CD8-positive, alpha-beta T cell (primary cell): ENCODE measurements at regions of chr6 and their contacts with region 1.

Region 1: GRCh38 chr6:31366693-31367470 is 9.9 kb upstream of the HLA-B start:
- DNase-seq: peak; percentile 80 to 94 (median 90)
- ATAC-seq: peak; percentile 98
- H3K4me3 ChIP-seq: peak overlapping the region; percentile 54 to 57
- H3K4me3 Mint-ChIP-seq: peak overlapping the region; percentile 86
- H3K27ac ChIP-seq: peak overlapping the region in 1 of 2 experiments; percentile 31
- H3K27ac Mint-ChIP-seq: peak overlapping the region; percentile 82
- H3K4me1 ChIP-seq: peaks cover 3% of the 10 kb centered on the region
- H3K4me1 Mint-ChIP-seq: peaks cover 15% of the 10 kb centered on the region
- H3K27me3 ChIP-seq: no peaks in the 10 kb centered on the region
- H3K27me3 Mint-ChIP-seq: peaks cover 11% of the 10 kb centered on the region
- CTCF ChIP-seq: peak; percentile 94

Region 2: DNA sequence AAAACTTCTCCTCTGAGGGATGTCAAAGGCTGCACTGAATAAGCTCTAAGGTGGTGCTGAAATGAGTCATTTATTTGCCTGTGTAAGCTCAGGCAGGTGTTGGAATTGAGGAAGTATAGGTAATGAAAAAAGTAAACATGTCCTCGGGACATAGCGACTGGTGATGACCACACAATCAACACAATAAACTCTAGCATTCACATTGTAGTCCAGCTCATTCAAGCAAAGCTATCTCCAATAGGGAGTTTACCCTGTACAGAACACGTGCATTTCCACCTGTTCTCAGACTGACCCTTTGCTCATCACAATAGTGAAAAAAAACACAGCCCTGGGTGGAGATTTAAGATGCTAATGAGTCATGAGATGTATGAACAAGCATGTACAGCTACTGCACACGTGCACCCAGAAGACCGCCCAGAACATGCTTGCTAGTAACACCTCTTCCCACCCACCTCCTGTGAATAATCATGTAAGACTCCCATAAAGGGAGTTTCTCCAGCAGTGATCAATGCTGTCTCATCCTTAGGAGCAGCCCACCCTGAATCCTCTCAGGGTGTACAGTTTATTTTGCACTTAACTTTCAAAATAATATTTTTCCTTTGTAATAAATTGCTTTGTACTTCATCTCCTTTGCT is 163.4 kb before region 1 on chr6:
- CTCF ChIA-PET with region 1: interaction called, 43 read pairs
- POLR2A ChIA-PET with region 1: interaction called, 55 read pairs
- intact Hi-C with region 1: no loop called
- DNase-seq: peak in 7 of 9 experiments; percentile 29 to 90 (median 63)
- ATAC-seq: peak; percentile 60
- H3K4me3 ChIP-seq: peak overlapping the region; percentile 65 to 95
- H3K4me3 Mint-ChIP-seq: peak overlapping the region; percentile 93
- H3K27ac ChIP-seq: peak overlapping the region; percentile 84 to 95
- H3K27ac Mint-ChIP-seq: peak overlapping the region; percentile 98
- H3K4me1 ChIP-seq: peaks cover 46% of the 10 kb centered on the region
- H3K4me1 Mint-ChIP-seq: peaks cover 60% of the 10 kb centered on the region
- H3K27me3 ChIP-seq: no peaks in the 10 kb centered on the region
- H3K27me3 Mint-ChIP-seq: no peaks in the 10 kb centered on the region
- CTCF ChIP-seq: no peak

Region 3: DNA sequence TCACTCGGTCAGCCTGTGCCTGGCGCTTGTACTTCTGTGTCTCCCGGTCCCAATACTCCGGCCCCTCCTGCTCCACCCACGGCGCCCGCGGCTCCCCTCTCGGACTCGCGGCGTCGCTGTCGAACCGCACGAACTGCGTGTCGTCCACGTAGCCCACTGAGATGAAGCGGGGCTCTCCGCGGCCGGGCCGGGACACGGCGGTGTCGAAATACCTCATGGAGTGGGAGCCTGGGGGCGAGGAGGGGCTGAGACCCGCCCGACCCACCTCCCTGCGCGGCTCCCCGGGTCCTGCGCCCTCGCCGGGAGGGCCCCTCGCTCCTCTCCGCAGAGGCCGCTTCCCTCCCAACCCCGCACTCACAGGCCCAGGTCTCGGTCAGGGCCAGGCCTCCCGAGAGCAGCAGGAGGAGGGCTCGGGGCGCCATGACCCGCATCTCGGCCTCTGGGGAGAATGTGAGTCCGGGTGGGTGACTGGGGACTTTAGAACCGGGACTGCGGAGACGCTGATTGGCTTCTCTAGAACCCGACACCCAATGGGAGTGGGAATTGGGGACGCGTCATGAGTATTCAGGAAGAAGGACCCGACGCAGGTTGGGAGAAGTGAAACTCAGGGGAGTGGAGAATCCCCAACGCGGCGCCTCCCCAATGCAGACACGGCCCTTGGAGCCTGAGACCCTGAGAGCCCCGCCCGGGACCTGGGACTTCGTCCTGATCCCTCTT is 95.1 kb before region 1 on chr6 and contains the start of gene HLA-C:
- CTCF ChIA-PET with region 1: interaction called, 15 read pairs
- POLR2A ChIA-PET with region 1: interaction called, 6 read pairs
- intact Hi-C with region 1: loop called (anchors 1 to 2 kb)
- DNase-seq: peak; percentile 79 to 98 (median 92)
- ATAC-seq: peak; percentile 85
- H3K4me3 ChIP-seq: peak within 1 kb of the TSS; percentile 82 to 86
- H3K4me3 Mint-ChIP-seq: peak within 1 kb of the TSS; percentile 95
- H3K27ac ChIP-seq: peak within 1 kb of the TSS; percentile 93 to 98
- H3K27ac Mint-ChIP-seq: peak within 1 kb of the TSS; percentile 100
- H3K4me1 ChIP-seq: peaks cover 43% of the 10 kb centered on the region
- H3K4me1 Mint-ChIP-seq: peaks cover 56% of the 10 kb centered on the region
- H3K27me3 ChIP-seq: no peaks in the 10 kb centered on the region
- H3K27me3 Mint-ChIP-seq: no peaks in the 10 kb centered on the region
- CTCF ChIP-seq: no peak
- total RNA-seq, gene HLA-C: 2,677 to 2,722 TPM

Region 4: DNA sequence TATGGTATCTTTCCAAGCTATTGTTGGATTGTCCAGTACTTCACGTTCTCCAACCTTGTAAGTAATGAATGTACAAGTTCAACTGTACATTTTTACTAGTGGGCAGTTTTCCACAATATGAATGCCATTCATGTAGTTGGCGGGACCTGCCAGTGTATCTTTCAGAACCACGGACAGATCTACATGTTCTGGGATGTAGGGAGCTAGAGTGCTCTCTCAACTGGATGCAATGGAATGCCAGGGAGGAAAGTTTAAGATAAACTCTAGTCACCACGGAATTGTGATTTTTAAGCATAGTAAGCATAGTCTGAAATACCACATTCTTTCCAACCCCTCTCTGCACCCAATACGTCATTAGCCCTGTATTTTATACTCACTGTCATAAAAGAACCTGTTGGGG is 73.5 kb before region 1 on chr6:
- CTCF ChIA-PET with region 1: interaction called, 13 read pairs
- POLR2A ChIA-PET with region 1: no interaction called
- intact Hi-C with region 1: no loop called
- DNase-seq: no peak
- ATAC-seq: no peak
- H3K4me3 ChIP-seq: no peak overlapping the region
- H3K4me3 Mint-ChIP-seq: no peak overlapping the region
- H3K27ac ChIP-seq: no peak overlapping the region
- H3K27ac Mint-ChIP-seq: no peak overlapping the region
- H3K4me1 ChIP-seq: no peaks in the 10 kb centered on the region
- H3K4me1 Mint-ChIP-seq: no peaks in the 10 kb centered on the region
- H3K27me3 ChIP-seq: peaks cover 0 to 2% of the 10 kb centered on the region in 2 experiments
- H3K27me3 Mint-ChIP-seq: peaks cover 3% of the 10 kb centered on the region
- CTCF ChIP-seq: no peak

Region 5: GRCh38 chr6:31378062-31378720 is 11.3 kb after region 1 on chr6:
- CTCF ChIA-PET with region 1: interaction called, 26 read pairs
- POLR2A ChIA-PET with region 1: no interaction called
- intact Hi-C with region 1: no loop called
- DNase-seq: no peak
- ATAC-seq: no peak
- H3K4me3 ChIP-seq: no peak overlapping the region
- H3K4me3 Mint-ChIP-seq: no peak overlapping the region
- H3K27ac ChIP-seq: no peak overlapping the region
- H3K27ac Mint-ChIP-seq: no peak overlapping the region
- H3K4me1 ChIP-seq: no peaks in the 10 kb centered on the region
- H3K4me1 Mint-ChIP-seq: no peaks in the 10 kb centered on the region
- H3K27me3 ChIP-seq: peaks cover 0 to 6% of the 10 kb centered on the region in 2 experiments
- H3K27me3 Mint-ChIP-seq: peaks cover 14% of the 10 kb centered on the region
- CTCF ChIP-seq: no peak